ENCODE measurements at regions of chr7 and their contacts with region 1.

Region 1: DNA sequence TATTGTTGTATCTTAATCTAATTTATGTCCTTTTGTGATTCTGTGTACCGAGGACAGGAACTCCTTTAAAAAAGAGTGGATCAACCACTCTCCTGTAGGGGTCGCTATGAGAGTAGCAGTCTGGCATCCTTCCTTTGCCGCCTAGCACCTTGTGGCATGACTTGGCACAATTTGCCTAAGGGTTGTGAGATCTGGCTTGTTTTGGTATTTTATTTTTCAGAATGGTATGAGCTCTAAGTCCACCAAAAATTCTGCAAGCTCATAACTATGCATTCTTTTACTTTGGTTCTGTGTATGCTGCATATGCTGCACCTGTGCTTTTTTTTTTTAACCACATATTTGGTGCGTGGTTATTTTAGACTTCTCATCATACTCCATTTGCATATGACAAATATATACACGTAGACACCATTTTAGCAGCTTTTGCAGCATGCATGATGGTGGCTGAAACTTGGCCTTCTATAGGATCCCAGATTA is 112.8 kb downstream of the CDK14 start:
- DNase-seq: peak; percentile 23
- H3K4me3 ChIP-seq: no peak overlapping the region
- H3K27ac ChIP-seq: no peak overlapping the region
- H3K4me1 ChIP-seq: peaks cover 12% of the 10 kb centered on the region
- H3K27me3 ChIP-seq: no peaks in the 10 kb centered on the region
- CTCF ChIP-seq: peak; percentile 60 to 61
- POLR2A ChIP-seq: no peak

Region 2: GRCh38 chr7:90552521-90552920 is 156.4 kb before region 1 on chr7:
- CTCF ChIA-PET with region 1: no interaction called
- POLR2A ChIA-PET with region 1: no interaction called
- dilution Hi-C with region 1: no loop called
- intact Hi-C with region 1: loop called (anchors 5 kb)
- DNase-seq: peak; percentile 46
- H3K4me3 ChIP-seq: no peak overlapping the region
- H3K27ac ChIP-seq: no peak overlapping the region
- H3K4me1 ChIP-seq: no peaks in the 10 kb centered on the region
- H3K27me3 ChIP-seq: peaks cover 0 to 5% of the 10 kb centered on the region in 2 experiments
- CTCF ChIP-seq: peak in 1 of 2 donors; percentile 3
- POLR2A ChIP-seq: no peak

Region 3: GRCh38 chr7:90720984-90721760 is 12.3 kb after region 1 on chr7:
- CTCF ChIA-PET with region 1: interaction called, 23 read pairs
- POLR2A ChIA-PET with region 1: no interaction called
- dilution Hi-C with region 1: no loop called
- intact Hi-C with region 1: no loop called
- DNase-seq: peak; percentile 73
- H3K4me3 ChIP-seq: no peak overlapping the region
- H3K27ac ChIP-seq: peak overlapping the region; percentile 46
- H3K4me1 ChIP-seq: peaks cover 13% of the 10 kb centered on the region
- H3K27me3 ChIP-seq: no peaks in the 10 kb centered on the region
- CTCF ChIP-seq: no peak
- POLR2A ChIP-seq: no peak

Region 4: DNA sequence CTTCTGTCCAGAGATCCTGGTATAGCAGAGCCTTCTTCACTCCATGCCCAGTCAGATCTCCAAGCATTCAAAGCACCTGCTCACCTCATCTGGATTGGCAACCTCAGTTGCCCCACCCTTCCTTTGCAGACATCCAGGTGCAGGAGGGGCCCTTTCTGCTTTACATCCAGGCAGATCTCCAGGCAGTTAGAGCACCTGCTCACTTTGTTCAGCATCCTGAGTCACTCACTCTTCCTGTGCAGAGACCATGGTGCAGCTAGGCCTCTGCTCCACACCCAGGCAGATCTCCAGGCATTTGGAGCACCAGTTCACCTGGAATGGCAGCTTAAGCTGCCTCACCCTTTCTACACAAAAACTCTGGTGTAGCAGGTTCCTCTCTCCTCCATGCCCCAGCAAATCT is 40.4 kb after region 1 on chr7:
- CTCF ChIA-PET with region 1: interaction called, 10 read pairs
- POLR2A ChIA-PET with region 1: no interaction called
- dilution Hi-C with region 1: no loop called
- intact Hi-C with region 1: no loop called
- DNase-seq: no peak
- H3K4me3 ChIP-seq: no peak overlapping the region
- H3K27ac ChIP-seq: no peak overlapping the region
- H3K4me1 ChIP-seq: peaks cover 5% of the 10 kb centered on the region
- H3K27me3 ChIP-seq: no peaks in the 10 kb centered on the region
- CTCF ChIP-seq: no peak
- POLR2A ChIP-seq: no peak

Measured in endothelial cell of umbilical vein (primary cell).